ENCODE measurements at regions of chr1 and their contacts with region 1.

Region 1: DNA sequence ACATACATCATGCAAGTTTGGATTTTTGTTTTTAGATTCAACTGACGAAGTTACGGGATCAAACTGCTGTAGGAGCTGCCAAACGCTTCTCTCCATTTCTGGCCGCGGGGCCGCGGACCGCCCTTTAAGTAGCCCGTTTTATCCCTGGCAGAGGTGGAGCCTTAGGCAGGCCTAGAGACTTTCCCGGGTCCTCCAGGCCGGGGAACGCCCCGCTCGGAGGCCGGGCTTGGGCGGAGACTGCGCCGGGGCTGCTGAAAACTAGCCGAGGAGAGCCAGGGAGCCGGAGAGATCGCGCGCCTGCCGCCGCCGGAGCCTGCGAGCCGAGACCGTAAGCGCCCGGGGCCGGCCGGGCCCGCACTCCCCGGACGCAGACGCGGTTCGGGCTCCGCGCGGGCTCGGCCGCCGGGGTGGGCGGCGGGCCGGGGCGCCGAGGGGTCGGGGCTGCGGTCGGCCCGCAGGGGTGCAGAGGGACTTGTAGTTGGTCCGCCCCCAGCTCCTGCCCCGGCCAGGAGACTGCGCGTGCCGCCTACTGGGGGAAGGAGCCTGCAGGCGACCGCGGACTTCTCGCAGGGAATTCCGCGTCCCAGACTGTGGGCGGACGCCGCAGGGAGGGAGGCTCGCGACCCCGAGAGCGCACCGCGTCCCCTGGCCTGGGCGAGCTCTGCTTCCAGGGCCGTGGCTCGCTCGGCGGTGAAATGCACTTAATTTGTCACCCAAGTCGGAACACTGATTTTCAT is at the start of gene EPHX1:
- DNase-seq: peak; percentile 93 to 95
- H3K4me3 ChIP-seq: peak within 1 kb of the TSS; percentile 61 to 67 (median 66)
- H3K27ac ChIP-seq: peak within 1 kb of the TSS; percentile 60 to 84 (median 84)
- H3K4me1 ChIP-seq: peaks cover 42 to 44% of the 10 kb centered on the region in 2 donors
- H3K27me3 ChIP-seq: no peaks in the 10 kb centered on the region
- CTCF ChIP-seq: peak in 2 of 6 experiments; percentile 33 to 43
- POLR2A ChIP-seq: peak; percentile 89 to 99
- total RNA-seq, gene EPHX1: 297 to 533 (median 441) TPM

Region 2: DNA sequence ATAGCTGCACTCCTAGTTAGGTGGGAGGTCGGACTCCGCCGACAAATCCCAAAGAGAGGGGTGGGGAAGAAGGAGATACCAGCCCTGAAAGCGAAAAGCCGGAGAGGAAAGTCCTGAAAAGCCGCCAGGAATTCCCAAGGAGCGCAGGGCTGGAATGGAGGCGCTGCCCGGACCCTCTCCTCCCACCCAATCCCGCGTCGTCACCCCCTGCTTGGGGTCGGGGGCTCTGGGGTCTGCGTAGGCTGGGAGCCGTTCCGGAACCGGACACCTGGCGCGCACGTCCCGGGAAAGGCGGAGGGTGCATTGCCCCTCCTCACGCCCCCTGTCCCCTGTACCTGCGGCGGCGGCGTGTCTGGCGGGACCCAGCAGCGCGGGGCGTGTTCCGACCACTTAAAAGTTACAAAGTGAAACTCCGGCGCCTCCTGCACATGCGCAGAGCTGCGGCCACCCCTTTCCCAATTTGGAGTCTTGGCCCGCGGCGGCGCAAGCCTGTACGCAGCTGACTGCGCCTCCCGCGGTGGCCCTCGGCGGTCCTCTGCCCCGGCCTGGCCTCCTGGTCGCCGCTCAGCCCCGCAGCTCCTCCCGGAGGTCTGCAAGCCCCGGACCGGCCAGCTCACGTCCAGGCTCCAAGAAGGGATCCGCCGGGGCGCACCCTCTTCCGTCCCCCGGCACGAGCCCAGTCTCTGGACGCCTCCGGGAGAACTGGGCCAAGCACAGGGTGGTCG is 72.1 kb after region 1 on chr1 and contains the start of gene TMEM63A:
- intact Hi-C with region 1: loop called (anchors 10 kb)
- DNase-seq: peak; percentile 95
- H3K4me3 ChIP-seq: peak within 1 kb of the TSS; percentile 66 to 96 (median 70)
- H3K27ac ChIP-seq: peak within 1 kb of the TSS; percentile 75 to 92 (median 83)
- H3K4me1 ChIP-seq: peaks cover 16 to 42% of the 10 kb centered on the region in 2 donors
- H3K27me3 ChIP-seq: no peaks in the 10 kb centered on the region
- CTCF ChIP-seq: peak in 5 of 6 experiments; percentile 19 to 60 (median 27)
- POLR2A ChIP-seq: peak; percentile 4 to 92
- total RNA-seq, gene TMEM63A: 30.1 to 57.7 (median 41.6) TPM

Measured in thyroid gland (tissue), 4 donors.